Activated CD4-positive, alpha-beta T cell treated with anti-CD3 and anti-CD28 coated beads, Interleukin-2, amount 10 ng/mL, durations not matched to agents 24 days and 14 days (primary cell): ENCODE measurements at regions of chr10 and their contacts with region 1.

Region 1: DNA sequence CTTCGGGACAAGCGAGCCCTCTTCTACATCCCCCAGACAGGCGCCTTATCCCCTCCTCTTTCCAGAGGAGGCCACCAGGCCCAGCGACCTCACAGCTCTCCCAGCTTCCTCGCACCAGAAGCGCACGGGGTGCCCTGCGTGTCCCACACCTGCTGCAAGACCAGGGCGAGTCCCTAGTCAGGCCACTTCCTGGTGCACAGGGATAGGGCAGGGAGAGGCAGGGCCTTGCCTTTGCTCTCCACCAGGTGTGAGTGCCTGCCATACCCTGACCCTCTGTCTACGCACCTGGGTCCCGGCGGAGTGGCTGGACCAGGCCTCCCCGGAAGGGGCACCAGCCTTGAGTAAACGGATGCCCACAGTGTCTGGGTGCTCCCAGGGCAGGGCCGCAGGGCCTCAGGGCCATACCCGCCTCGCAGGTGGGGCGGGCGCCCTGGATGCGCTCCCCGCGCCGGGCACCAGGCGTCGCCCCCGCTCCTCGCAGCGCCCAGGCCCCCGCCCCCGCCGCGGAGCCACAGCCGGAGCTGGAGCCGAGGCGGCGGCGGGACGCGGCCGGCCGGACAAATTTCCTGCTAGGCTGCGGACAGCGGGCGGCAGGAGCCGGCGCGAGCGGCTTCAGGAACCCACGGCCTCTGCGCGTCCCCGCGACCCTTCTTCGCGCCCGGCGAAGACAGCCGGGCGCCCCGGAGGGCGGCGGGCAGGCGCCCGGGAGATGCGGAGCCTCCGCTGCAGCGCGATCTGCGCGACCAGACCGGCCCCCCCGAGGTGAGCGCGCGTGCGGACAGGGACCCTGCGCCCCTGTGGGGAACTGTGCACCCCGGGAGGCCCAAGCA is at the start of gene PTPRE:
- DNase-seq: peak; percentile 91
- H3K4me3 Mint-ChIP-seq: peak within 1 kb of the TSS; percentile 46
- H3K27ac Mint-ChIP-seq: no peak within 1 kb of the TSS
- H3K4me1 Mint-ChIP-seq: no peaks in the 10 kb centered on the region
- H3K27me3 Mint-ChIP-seq: peaks cover 48% of the 10 kb centered on the region
- total RNA-seq, gene PTPRE: 33.6 and 35.8 TPM in 2 replicates

Region 2: GRCh38 chr10:128011175-128011979 is 104.6 kb after region 1 on chr10:
- intact Hi-C with region 1: loop called (anchors 1 kb)
- DNase-seq: peak; percentile 97
- H3K4me3 Mint-ChIP-seq: peak overlapping the region; percentile 49
- H3K27ac Mint-ChIP-seq: no peak overlapping the region
- H3K4me1 Mint-ChIP-seq: peaks cover 10% of the 10 kb centered on the region
- H3K27me3 Mint-ChIP-seq: peaks cover 10% of the 10 kb centered on the region

Region 3: DNA sequence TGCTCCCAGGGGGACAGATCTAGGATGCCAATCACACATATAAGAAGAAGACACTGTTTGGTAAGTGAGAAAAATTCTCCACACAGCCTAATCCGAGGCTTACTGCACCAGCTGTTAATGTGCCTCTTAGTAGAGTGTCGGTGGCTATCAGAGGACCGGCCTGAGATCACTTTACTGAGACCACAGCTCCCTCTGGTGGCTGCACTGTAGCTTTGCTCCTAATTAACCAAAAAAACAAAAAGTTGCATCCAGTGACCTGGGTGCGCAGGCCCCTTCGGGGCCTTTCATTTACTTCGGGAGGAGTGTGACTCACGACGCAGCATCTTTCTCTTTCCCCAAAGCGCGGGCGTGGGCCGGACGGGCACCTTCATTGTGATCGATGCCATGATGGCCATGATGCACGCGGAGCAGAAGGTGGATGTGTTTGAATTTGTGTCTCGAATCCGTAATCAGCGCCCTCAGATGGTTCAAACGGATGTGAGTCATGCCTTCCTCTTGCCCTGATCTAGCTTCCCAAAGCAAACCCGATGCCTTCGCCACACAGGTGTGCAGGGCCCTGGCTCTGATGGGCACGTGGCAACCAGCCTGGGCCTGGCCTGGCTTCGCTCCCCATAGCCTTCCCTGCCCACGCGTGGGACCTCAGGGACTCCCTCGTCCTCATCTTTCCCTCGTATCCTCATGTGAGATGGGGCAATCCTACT is 162.7 kb after region 1 on chr10:
- intact Hi-C with region 1: loop called (anchors 1 kb)
- DNase-seq: peak; percentile 92
- H3K4me3 Mint-ChIP-seq: no peak overlapping the region
- H3K27ac Mint-ChIP-seq: peak overlapping the region; percentile 34
- H3K4me1 Mint-ChIP-seq: peaks cover 34% of the 10 kb centered on the region
- H3K27me3 Mint-ChIP-seq: no peaks in the 10 kb centered on the region